Vagina (tissue), 2 donors: ENCODE measurements at regions of chr15 and their contacts with region 1.

Region 1: DNA sequence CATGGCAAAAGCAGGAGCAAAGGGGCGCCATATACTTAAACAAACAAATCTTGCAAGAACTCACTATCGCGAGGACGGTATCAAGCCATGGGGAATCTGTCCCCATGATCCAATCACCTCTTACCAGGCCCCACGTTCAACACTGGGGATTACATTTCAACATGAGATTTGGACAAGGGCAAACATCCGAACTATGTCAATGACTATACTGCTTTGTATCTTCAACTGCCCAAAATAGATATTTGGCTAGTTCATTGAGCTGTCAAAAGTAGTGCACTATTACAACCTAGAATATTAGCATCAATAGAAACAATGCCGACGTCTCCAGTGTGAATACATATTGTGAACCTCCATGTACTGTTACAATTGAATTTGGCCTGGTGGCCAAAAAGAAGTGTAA is 760.4 kb downstream of the MCTP2 start:
- DNase-seq: no peak
- H3K4me3 ChIP-seq: no peak overlapping the region
- H3K27ac ChIP-seq: no peak overlapping the region
- H3K4me1 ChIP-seq: no peaks in the 10 kb centered on the region
- H3K27me3 ChIP-seq: no peaks in the 10 kb centered on the region
- CTCF ChIP-seq: no peak
- POLR2A ChIP-seq: no peak

Region 2: GRCh38 chr15:95032156-95032555 is 40.4 kb after region 1 on chr15:
- intact Hi-C with region 1: no loop called
- DNase-seq: no peak
- H3K4me3 ChIP-seq: no peak overlapping the region
- H3K27ac ChIP-seq: no peak overlapping the region
- H3K4me1 ChIP-seq: no peaks in the 10 kb centered on the region
- H3K27me3 ChIP-seq: no peaks in the 10 kb centered on the region
- CTCF ChIP-seq: no peak
- POLR2A ChIP-seq: no peak

Region 3: DNA sequence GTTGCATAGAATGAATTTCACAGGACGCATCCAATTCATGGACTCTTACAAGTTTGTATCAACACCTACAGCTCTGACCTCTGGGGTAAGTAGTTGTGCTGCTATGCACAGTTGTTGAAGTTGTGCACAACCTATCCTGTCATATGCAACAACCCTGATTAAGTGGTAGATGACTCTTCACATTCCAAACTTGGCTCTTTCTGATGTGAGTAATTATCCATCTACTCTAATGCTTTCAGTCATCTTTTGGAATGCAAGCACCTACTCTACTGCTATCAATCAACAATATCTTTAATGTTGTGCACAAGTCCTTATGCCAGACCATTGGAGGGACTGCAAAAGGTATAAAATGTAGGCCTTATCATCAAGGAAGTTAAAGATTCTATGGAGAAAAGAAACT is 161.0 kb after region 1 on chr15:
- intact Hi-C with region 1: no loop called
- DNase-seq: no peak
- H3K4me3 ChIP-seq: no peak overlapping the region
- H3K27ac ChIP-seq: no peak overlapping the region
- H3K4me1 ChIP-seq: no peaks in the 10 kb centered on the region
- H3K27me3 ChIP-seq: no peaks in the 10 kb centered on the region
- CTCF ChIP-seq: no peak
- POLR2A ChIP-seq: no peak

Region 4: GRCh38 chr15:96593724-96594123 is 1602.0 kb after region 1 on chr15:
- intact Hi-C with region 1: loop called (anchors 5 kb)
- DNase-seq: no peak
- H3K4me3 ChIP-seq: no peak overlapping the region
- H3K27ac ChIP-seq: no peak overlapping the region
- H3K4me1 ChIP-seq: no peaks in the 10 kb centered on the region
- H3K27me3 ChIP-seq: no peaks in the 10 kb centered on the region
- CTCF ChIP-seq: no peak
- POLR2A ChIP-seq: no peak